ENCODE measurements at regions of chr6 and their contacts with region 1.

Region 1: GRCh38 chr6:32984605-32985389 is 16.4 kb downstream of the BRD2 start:
- DNase-seq: peak; percentile 95
- H3K4me3 Mint-ChIP-seq: no peak overlapping the region
- H3K27ac Mint-ChIP-seq: peak overlapping the region; percentile 12
- H3K4me1 Mint-ChIP-seq: peaks cover 20% of the 10 kb centered on the region
- H3K27me3 Mint-ChIP-seq: peaks cover 24% of the 10 kb centered on the region

Region 2: DNA sequence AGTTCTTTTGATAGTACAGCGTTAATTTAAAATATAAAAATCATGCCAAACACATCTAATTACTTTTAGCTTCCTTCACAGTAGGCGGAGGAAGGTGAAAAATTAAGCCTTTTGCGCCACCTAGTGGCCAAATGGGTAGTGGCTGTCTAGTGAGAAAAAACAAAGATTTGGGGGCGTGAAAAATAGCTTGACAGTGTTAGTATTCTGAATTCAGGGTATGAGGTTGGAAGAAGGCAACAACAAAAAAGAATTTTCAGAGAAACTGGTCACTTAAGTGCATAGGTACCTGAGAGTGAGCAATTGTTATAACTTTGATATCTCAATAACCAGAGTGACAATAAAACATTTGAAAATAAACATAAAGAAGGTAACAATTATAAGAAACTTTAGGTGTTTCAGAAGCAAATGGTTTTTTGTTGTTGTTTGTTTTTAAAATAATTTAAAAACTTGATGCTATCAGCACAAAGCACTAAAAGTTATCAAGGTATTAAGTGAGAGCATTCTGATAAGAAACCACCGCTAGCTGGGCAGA is 116.5 kb before region 1 on chr6:
- CTCF ChIA-PET with region 1: interaction called, 18 read pairs
- DNase-seq: peak; percentile 91
- H3K4me3 Mint-ChIP-seq: no peak overlapping the region
- H3K27ac Mint-ChIP-seq: no peak overlapping the region
- H3K4me1 Mint-ChIP-seq: peaks cover 35% of the 10 kb centered on the region
- H3K27me3 Mint-ChIP-seq: peaks cover 7% of the 10 kb centered on the region

Region 3: GRCh38 chr6:32885698-32886286 is 99.0 kb before region 1 on chr6:
- CTCF ChIA-PET with region 1: interaction called, 60 read pairs
- DNase-seq: no peak
- H3K4me3 Mint-ChIP-seq: no peak overlapping the region
- H3K27ac Mint-ChIP-seq: no peak overlapping the region
- H3K4me1 Mint-ChIP-seq: no peaks in the 10 kb centered on the region
- H3K27me3 Mint-ChIP-seq: peaks cover 23% of the 10 kb centered on the region

Region 4: DNA sequence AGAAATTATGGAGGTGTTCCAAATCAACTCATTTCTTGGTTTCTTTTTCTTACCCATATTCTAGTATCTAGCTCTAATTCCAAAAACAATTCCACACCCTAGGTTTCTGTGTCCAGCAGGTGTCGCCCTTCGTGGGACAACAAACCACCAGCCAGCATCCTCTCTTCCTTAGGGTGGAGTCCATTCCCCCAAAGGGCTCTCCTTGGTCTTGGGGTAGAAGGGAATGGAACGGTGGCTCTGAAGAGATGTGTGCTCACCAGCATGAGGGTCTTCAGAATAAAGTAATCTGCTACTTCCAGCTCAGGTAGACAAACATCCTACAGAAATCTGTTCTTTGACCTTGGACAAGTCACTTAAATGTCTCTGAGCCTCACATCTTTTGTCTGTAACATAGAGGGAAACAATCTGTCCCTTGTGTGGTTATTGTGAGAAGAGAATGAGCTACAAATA is 51.1 kb before region 1 on chr6:
- CTCF ChIA-PET with region 1: interaction called, 140 read pairs
- DNase-seq: peak; percentile 86
- H3K4me3 Mint-ChIP-seq: no peak overlapping the region
- H3K27ac Mint-ChIP-seq: no peak overlapping the region
- H3K4me1 Mint-ChIP-seq: peaks cover 13% of the 10 kb centered on the region
- H3K27me3 Mint-ChIP-seq: peaks cover 20% of the 10 kb centered on the region

Region 5: DNA sequence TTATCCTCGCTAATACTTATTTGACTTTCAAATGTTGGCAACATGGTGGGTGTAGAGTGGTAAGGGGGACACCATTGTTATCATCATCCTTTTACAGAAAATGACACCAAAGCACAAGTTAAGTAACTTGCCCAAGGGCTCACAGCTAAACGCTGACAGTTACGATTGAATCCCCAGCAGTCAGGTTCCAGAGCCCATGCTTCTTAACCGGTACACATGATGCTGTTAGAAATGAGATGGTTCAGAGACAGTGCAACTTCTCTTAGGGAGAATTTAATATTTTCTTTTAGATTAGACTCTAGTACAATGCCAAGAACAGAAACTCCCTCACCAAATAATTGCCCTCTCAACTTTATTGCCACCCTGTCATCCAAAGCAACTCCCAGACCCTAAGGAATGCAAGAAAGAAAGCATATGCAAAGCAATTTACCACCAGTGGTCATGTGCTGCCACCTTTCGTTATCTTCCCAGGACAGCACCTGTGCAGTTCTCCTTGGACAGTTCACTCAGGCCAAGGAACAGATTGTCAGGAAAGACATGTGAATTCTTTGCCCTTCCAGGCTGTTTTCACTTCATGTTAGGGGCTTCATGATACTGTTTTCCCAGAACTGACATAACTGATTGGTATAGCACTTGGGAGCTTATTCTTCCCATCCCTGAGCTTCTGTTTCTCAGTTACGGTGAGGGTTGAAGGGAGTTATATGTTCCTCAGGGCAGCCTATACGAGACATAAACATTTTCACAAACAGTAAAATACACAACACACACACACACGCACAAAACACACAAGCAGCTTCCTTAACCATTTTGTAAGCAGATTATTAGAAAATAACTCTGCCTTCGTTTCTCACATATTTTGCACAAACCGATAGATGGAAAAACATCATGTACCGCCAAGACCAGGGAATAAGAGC is 37.0 kb before region 1 on chr6:
- CTCF ChIA-PET with region 1: interaction called, 66 read pairs
- DNase-seq: peak; percentile 64
- H3K4me3 Mint-ChIP-seq: no peak overlapping the region
- H3K27ac Mint-ChIP-seq: no peak overlapping the region
- H3K4me1 Mint-ChIP-seq: peaks cover 69% of the 10 kb centered on the region
- H3K27me3 Mint-ChIP-seq: no peaks in the 10 kb centered on the region

Region 6: DNA sequence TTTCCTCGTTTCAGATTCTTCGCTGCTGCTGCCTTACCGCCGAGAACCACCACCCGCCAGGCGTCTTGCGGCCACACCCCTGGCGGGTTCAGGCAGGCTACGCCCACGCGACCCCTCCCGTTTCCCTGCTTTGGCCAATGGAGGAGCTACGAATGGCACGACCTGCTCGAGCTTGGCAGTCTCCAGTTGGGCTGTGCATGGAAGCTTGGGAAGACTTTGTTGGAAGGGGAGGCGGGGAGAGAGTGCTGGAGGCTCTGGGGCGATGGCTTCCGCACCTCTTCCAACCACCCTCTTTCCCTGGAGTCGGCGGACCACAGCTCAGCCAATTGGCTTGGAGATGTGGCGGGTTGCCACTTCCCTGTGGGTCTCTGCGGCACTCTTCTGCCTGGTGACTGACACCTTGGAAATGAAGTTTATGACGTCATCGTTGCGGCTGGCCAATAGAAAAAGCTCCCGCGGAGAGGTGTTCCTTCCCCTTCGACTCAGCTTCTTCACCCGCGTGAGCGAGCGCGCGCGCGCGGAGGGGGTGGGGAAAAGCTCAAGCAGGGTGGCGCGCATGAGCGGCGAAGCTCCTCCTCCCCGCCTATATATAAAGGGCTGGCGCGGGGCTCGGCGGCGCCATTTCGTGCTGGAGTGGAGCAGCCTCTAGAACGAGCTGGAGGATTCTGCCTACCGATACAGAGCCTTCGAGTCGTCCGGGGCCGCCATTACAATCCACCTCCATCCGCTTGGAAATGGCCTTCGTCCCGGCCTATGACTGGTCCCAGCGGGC is 13.0 kb before region 1 on chr6:
- CTCF ChIA-PET with region 1: interaction called, 28 read pairs
- DNase-seq: peak; percentile 99
- H3K4me3 Mint-ChIP-seq: peak overlapping the region; percentile 85
- H3K27ac Mint-ChIP-seq: peak overlapping the region; percentile 97
- H3K4me1 Mint-ChIP-seq: peaks cover 25% of the 10 kb centered on the region
- H3K27me3 Mint-ChIP-seq: peaks cover 10% of the 10 kb centered on the region

Region 7: DNA sequence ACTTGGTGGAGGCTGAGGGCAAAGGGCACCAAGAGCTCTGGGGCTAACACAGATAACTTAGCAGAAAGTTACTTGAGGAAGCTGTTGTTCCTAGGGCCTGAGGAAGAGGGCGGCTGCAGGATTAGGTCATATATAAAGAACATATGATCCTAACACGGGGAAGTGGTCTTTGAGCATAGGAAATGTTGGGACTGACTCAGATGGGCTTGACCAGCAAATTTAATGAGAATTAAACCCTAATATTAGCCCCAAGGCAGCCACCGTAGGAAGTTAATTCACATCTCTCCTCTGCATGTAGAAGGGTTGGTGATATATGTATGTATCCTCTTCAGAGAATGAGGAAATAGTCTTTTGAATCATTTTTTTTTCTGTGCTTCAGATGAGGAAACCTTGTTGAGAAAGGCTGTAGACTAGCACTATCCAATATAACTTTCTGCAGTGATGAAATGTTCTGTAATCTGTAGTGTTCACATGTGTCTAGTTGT is 460.4 kb after region 1 on chr6:
- CTCF ChIA-PET with region 1: no interaction called
- DNase-seq: no peak
- H3K4me3 Mint-ChIP-seq: no peak overlapping the region
- H3K27ac Mint-ChIP-seq: peak overlapping the region; percentile 16
- H3K4me1 Mint-ChIP-seq: no peaks in the 10 kb centered on the region
- H3K27me3 Mint-ChIP-seq: no peaks in the 10 kb centered on the region